ENCODE measurements at regions of chr9 and their contacts with region 1.

Region 1: GRCh38 chr9:131621551-131622358 is 76.4 kb downstream of the PRRT1B start:
- DNase-seq: no peak
- H3K4me3 ChIP-seq: no peak overlapping the region
- H3K27ac ChIP-seq: no peak overlapping the region
- H3K4me1 ChIP-seq: peaks cover 8% of the 10 kb centered on the region
- H3K27me3 ChIP-seq: no peaks in the 10 kb centered on the region
- CTCF ChIP-seq: no peak

Region 2: DNA sequence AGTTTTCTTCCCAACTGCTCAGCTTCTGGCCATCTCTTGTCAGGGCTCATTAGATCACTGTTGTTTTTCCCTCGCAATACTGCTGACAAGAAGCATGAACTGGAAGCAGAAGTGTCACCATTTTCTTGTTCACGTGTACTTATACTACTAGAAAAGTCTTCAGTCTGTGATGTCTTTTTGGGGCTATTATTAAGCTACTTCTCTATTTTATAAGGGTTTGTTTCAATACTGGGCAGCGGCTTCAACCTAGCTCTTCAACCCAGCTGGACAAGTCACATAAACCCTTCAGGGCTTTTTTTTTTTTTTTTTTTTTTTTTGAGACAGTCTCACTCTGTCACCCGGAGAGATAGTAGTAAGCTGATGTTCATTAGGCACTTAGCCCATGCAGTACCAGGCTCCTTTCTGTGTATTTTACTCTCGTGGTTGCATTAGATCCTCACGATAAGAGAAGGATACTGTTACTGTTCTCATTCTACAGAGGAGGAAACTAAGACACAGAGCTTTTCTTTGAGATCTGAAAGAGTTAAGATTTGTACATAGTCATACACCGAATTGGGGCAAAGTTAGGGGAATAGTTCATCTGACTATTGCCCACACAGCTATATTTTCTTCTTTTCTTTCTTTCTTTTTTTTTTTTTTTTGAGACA is 97.6 kb after region 1 on chr9:
- CTCF ChIA-PET with region 1: no interaction called
- dilution Hi-C with region 1: loop called (anchors 5 kb)
- in situ Hi-C with region 1: no loop called
- intact Hi-C with region 1: no loop called
- DNase-seq: no peak
- H3K4me3 ChIP-seq: no peak overlapping the region
- H3K27ac ChIP-seq: no peak overlapping the region
- H3K4me1 ChIP-seq: peaks cover 7% of the 10 kb centered on the region
- H3K27me3 ChIP-seq: no peaks in the 10 kb centered on the region
- CTCF ChIP-seq: no peak

Region 3: DNA sequence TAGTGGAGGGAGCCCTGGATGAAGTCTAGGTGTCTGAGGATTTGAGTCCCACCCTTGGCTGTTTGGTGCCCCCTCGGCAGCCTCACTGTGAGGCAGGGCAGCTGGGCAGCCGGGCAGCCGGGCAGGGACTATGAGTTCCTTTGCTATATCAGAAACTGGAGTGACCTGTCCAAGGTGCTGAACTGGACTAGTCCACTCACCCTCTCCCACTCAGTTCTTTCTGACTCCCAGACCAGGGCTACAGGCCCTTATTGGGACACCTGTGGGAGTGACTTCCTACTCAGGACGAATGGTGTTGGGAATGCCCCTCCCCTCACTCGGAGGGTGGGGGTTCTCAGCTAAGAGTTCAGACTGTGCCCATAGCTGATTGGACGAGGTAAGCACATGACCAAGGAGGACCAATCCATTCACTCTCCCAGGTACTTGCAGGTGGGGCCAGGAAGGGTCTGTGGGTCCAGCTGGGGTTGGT is 152.2 kb after region 1 on chr9:
- CTCF ChIA-PET with region 1: no interaction called
- dilution Hi-C with region 1: no loop called
- in situ Hi-C with region 1: no loop called
- intact Hi-C with region 1: no loop called
- DNase-seq: peak; percentile 47
- H3K4me3 ChIP-seq: no peak overlapping the region
- H3K27ac ChIP-seq: no peak overlapping the region
- H3K4me1 ChIP-seq: no peaks in the 10 kb centered on the region
- H3K27me3 ChIP-seq: no peaks in the 10 kb centered on the region
- CTCF ChIP-seq: no peak